Breast epithelium (tissue), 4 donors: ENCODE measurements at regions of chr9 and their contacts with region 1.

Region 1: GRCh38 chr9:16571127-16571802 is 299.2 kb downstream of the BNC2 start:
- DNase-seq: no peak
- H3K4me3 ChIP-seq: no peak overlapping the region
- H3K27ac ChIP-seq: no peak overlapping the region
- H3K4me1 ChIP-seq: no peaks in the 10 kb centered on the region
- H3K27me3 ChIP-seq: no peaks in the 10 kb centered on the region
- CTCF ChIP-seq: no peak
- POLR2A ChIP-seq: no peak

Region 2: DNA sequence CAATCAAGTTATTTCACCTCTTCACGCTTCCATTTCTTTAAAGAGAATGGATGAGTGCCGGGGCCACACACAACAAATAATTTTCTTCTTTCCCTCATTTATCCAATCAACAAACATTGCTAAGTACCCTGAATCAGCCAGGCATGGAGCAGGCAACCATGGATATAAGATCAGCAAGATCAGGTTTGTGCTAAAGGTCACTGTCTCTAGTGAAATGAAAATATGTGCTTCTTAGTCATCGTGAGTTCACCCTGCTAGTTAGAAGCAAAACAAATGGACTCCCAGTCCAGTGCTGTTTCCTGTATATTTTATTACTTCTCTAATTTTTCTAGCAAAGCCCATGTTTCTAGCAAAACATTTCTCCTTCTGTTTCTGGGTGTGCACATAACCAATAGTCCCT is 330.0 kb before region 1 on chr9:
- intact Hi-C with region 1: loop called (anchors 5 kb)
- DNase-seq: no peak
- H3K4me3 ChIP-seq: no peak overlapping the region
- H3K27ac ChIP-seq: no peak overlapping the region
- H3K4me1 ChIP-seq: no peaks in the 10 kb centered on the region
- H3K27me3 ChIP-seq: no peaks in the 10 kb centered on the region
- CTCF ChIP-seq: no peak
- POLR2A ChIP-seq: no peak

Region 3: DNA sequence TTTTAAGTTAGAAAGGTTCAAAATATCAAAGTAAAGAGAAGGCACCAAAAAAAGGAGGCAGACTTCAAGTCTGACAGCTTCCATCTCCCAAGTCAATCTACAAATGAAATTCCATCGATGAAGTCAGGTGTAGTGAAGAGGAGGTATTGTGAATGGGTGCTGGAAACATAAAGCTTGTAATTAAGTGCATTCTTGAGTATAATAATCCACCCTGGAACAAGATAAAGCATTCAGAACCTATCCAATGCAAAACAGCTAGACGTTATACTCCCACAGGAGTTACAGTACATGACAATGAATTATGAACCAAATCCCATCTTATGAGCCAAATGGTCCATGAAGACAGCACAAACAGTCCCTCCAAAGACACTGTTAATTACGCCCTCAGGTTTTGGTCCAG is 276.9 kb after region 1 on chr9:
- intact Hi-C with region 1: no loop called
- DNase-seq: no peak
- H3K4me3 ChIP-seq: no peak overlapping the region
- H3K27ac ChIP-seq: no peak overlapping the region
- H3K4me1 ChIP-seq: no peaks in the 10 kb centered on the region
- H3K27me3 ChIP-seq: no peaks in the 10 kb centered on the region
- CTCF ChIP-seq: no peak
- POLR2A ChIP-seq: no peak